A549 (cell line): ENCODE measurements at regions of chr15 and their contacts with region 1.

Region 1: DNA sequence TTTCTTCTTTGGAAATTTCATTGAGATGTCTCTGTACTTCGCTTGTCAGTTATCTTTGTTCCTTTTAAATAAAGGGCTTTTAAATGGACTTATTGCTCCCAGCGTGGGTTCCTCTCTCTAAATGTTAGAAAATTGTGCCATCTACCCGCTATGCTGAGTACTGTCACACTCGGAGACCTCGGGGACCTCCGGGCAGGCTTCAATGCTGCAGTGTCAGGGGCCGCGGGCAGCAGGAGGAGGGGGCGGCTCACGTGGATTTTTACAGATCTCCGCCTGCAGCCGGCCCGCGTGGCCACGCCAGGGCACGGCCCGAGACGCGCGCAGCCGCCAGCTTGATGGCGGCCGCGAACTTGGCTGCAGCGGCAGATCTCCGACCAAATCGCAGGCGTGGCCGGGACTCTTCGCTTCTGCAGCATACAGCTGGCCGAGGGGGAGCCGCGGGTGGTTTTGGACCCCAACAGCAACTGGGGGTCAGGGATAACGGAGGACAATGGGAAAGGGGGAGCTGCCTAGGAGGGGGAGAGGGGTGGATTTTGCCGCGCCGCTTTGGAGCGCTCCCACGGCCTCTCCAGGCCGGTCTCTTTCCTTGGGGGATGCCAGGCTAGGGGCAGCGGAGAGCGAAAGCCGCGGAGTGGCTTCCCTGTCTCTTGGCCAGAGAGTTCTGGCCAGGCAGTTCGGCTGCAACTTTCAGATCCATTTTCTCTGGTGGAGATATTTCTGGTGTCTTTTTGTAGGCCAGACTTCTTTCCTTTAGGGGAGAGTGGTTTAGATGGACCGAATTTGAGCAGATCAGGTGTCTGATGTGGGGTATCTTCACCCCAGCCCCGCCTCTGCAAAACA is 15.3 kb downstream of the NR2F2 start:
- DNase-seq: peak; percentile 80 to 94
- ATAC-seq: peak; percentile 79 to 89
- H3K4me3 ChIP-seq: peak overlapping the region; percentile 46
- H3K27ac ChIP-seq: peak overlapping the region; percentile 51 to 76
- H3K4me1 ChIP-seq: peaks cover 14% of the 10 kb centered on the region; the same call in 2 of the 3 replicates
- CTCF ChIP-seq: peak; percentile 87
- EP300 ChIP-seq: no peak
- POLR2A ChIP-seq: no peak
- RAD21 ChIP-seq: peak; percentile 94 to 96

Region 2: GRCh38 chr15:96321639-96322535 is 23.9 kb before region 1 on chr15:
- CTCF ChIA-PET with region 1: interaction called, 280 read pairs
- POLR2A ChIA-PET with region 1: interaction called, 113 read pairs
- DNase-seq: no peak
- ATAC-seq: no peak; a peak in 1 of 6 replicates
- H3K4me3 ChIP-seq: peak overlapping the region; percentile 22; the same call in 2 of the 3 replicates
- H3K27ac ChIP-seq: 0 out of 6 replicates have a peak overlapping the region, but pooled peaks of 1 of the 2 experiments have one; percentile 29
- H3K4me1 ChIP-seq: peaks cover 11% of the 10 kb centered on the region
- CTCF ChIP-seq: no peak
- EP300 ChIP-seq: no peak
- POLR2A ChIP-seq: no peak
- RAD21 ChIP-seq: no peak

Region 3: GRCh38 chr15:96356494-96357455 is 11.0 kb after region 1 on chr15:
- CTCF ChIA-PET with region 1: interaction called, 43 read pairs
- POLR2A ChIA-PET with region 1: interaction called, 8 read pairs
- DNase-seq: peak; percentile 82 to 84
- ATAC-seq: peak; percentile 69 to 84
- H3K4me3 ChIP-seq: peak overlapping the region; percentile 57
- H3K27ac ChIP-seq: peak overlapping the region; percentile 69 to 87
- H3K4me1 ChIP-seq: 0 out of 3 replicates have a peak, but pooled peaks cover 10% of the 10 kb centered on the region
- CTCF ChIP-seq: peak; percentile 98
- EP300 ChIP-seq: no peak
- POLR2A ChIP-seq: no peak
- RAD21 ChIP-seq: peak; percentile 75 to 90

Region 4: GRCh38 chr15:96416934-96417759 is 71.4 kb after region 1 on chr15:
- CTCF ChIA-PET with region 1: no interaction called
- POLR2A ChIA-PET with region 1: no interaction called
- DNase-seq: peak in 1 of 2 experiments; percentile 14
- ATAC-seq: peak; percentile 51 to 73; a peak in 4 of 6 replicates
- H3K4me3 ChIP-seq: peak overlapping the region; percentile 31; the same call in 2 of the 3 replicates
- H3K27ac ChIP-seq: no peak overlapping the region
- H3K4me1 ChIP-seq: peaks cover 15% of the 10 kb centered on the region
- CTCF ChIP-seq: no peak
- EP300 ChIP-seq: no peak
- POLR2A ChIP-seq: no peak
- RAD21 ChIP-seq: no peak